ENCODE measurements at regions of chr5 and their contacts with region 1.

Region 1: GRCh38 chr5:138824924-138825863 is 49.9 kb downstream of the LRRTM2 start:
- DNase-seq: no peak
- H3K4me3 Mint-ChIP-seq: no peak overlapping the region
- H3K27ac Mint-ChIP-seq: peak overlapping the region; percentile 91
- H3K4me1 Mint-ChIP-seq: peaks cover 30% of the 10 kb centered on the region
- H3K27me3 Mint-ChIP-seq: no peaks in the 10 kb centered on the region

Region 2: GRCh38 chr5:138737494-138738265 is 87.5 kb before region 1 on chr5:
- intact Hi-C with region 1: loop called (anchors 5 kb)
- DNase-seq: no peak
- H3K4me3 Mint-ChIP-seq: no peak overlapping the region
- H3K27ac Mint-ChIP-seq: peak overlapping the region; percentile 92
- H3K4me1 Mint-ChIP-seq: peaks cover 38% of the 10 kb centered on the region
- H3K27me3 Mint-ChIP-seq: peaks cover 10% of the 10 kb centered on the region

Region 3: GRCh38 chr5:138789771-138790242 is 35.4 kb before region 1 on chr5:
- intact Hi-C with region 1: loop called (anchors 1 kb)
- DNase-seq: no peak
- H3K4me3 Mint-ChIP-seq: no peak overlapping the region
- H3K27ac Mint-ChIP-seq: peak overlapping the region; percentile 24
- H3K4me1 Mint-ChIP-seq: peaks cover 31% of the 10 kb centered on the region
- H3K27me3 Mint-ChIP-seq: peaks cover 1% of the 10 kb centered on the region

Region 4: DNA sequence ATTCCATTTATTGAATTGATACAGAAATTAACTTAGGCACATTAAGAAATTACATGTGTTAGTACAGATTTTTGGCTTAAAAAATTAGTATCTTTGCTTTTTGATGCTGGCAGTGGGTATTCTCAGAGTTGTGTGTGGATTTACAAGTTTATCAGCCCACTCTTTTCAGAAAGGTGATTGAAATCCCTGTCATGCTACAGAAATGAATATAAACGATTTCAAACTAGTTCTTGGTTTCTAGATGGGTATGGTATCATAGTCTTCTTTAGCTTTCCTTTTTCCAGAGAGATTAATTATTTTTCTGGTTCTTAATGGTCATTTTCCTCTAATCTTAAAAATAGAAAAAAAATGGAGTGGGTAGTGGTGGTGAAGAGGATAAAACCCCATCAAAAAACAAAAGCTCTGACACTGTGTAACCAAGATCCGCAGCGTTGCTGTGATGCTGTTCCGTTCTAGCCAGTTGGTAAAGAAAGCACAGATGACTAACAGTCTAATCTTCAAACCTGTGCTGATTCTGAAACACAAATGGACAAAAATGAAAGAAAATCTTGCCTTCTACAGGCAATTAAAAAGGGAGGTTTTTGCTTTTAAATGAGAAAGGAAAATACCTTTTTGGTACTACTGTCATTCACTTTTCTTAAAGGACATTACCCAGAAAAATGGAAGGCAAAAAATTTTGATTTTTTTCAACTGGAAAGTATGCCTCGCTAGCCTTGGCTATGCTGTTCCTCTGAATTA is 44.7 kb after region 1 on chr5:
- intact Hi-C with region 1: loop called (anchors 2 kb)
- DNase-seq: no peak
- H3K4me3 Mint-ChIP-seq: no peak overlapping the region
- H3K27ac Mint-ChIP-seq: peak overlapping the region; percentile 76
- H3K4me1 Mint-ChIP-seq: peaks cover 19% of the 10 kb centered on the region
- H3K27me3 Mint-ChIP-seq: peaks cover 15% of the 10 kb centered on the region

Region 5: DNA sequence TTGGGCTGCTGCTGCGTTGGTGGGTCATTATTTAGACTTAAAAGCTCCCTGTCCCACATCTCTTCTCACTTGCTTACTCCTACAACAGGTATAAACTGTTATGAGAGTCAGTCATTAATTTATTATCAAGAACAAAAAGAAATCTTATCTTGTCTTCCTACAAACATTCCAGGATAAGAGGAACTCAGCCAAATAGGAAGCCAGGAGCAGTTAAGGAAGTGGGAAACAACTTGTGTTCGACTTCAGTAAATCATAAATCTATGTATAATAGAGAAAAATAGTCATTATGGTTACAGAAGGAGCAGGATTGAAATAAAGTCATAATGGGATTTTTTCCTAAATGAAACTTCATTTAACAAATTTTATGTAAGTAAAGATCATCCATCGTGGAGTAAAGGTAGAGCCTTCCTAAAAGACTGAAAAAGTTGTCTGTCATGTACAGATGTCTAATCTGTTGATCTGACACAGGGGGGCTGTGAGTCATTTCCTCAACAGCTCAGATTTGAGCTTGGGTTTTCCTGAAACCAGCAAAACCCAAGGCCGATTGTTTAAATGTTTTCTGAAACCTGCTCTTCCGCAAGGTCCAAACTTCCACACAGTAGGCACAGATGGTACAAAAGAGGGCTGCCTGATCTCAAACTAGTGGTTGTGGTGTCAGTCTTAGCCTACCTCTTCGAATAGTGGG is 75.2 kb after region 1 on chr5:
- intact Hi-C with region 1: no loop called
- DNase-seq: no peak
- H3K4me3 Mint-ChIP-seq: no peak overlapping the region
- H3K27ac Mint-ChIP-seq: no peak overlapping the region
- H3K4me1 Mint-ChIP-seq: peaks cover 29% of the 10 kb centered on the region
- H3K27me3 Mint-ChIP-seq: peaks cover 19% of the 10 kb centered on the region

Measured in activated T-helper 2 cell treated with anti-CD3 and anti-CD28 coated beads, Interferon-gamma antibody, Interleukin-2, Interleukin-4, amounts not matched to agents 10 μg/mL and 5 μg/mL and 100 μg/mL, durations not matched to agents 14 hours and 24 hours and 36 hours (primary cell).